Prostate gland (tissue), 2 donors: ENCODE measurements at regions of chr6 and their contacts with region 1.

Region 1: DNA sequence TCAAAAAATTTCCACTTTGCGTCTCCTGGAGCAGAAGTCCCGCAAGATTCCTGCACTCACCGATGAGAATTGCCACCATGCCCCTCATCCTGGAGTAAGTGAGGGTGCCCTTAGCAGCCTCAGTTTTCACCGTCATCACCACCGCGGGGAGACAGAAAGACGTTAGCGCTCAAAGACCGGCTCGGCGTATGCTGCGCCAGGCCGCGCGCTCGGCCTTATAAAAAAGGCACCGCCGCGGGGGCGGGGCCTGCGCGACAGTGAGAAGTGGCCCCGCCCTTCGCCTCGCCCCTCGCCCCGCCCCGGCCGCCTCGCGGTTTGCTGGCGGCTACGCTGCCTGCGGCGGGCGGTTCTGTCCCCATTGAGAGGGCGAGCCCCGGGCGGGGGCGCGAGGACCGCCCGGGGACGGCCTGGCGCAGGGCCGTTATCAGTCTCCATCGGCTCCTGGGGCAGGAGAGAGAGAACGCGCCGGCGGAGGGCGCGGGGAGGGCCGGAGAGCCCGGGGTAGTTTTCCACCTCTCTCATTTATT is 122.3 kb upstream of the SLC2A12 start:
- DNase-seq: peak; percentile 93
- H3K4me3 ChIP-seq: peak overlapping the region; percentile 64 to 73
- H3K27ac ChIP-seq: peak overlapping the region; percentile 90 to 94
- H3K4me1 ChIP-seq: no peaks in the 10 kb centered on the region
- H3K27me3 ChIP-seq: no peaks in the 10 kb centered on the region
- CTCF ChIP-seq: peak in 3 of 4 experiments; percentile 10 to 40 (median 25)
- POLR2A ChIP-seq: peak; percentile 97

Region 2: GRCh38 chr6:134199848-134200606 is 25.3 kb after region 1 on chr6:
- intact Hi-C with region 1: no loop called
- DNase-seq: no peak
- H3K4me3 ChIP-seq: no peak overlapping the region
- H3K27ac ChIP-seq: no peak overlapping the region
- H3K4me1 ChIP-seq: no peaks in the 10 kb centered on the region
- H3K27me3 ChIP-seq: no peaks in the 10 kb centered on the region
- CTCF ChIP-seq: no peak
- POLR2A ChIP-seq: no peak

Region 3: GRCh38 chr6:134640975-134641429 is 466.3 kb after region 1 on chr6:
- intact Hi-C with region 1: loop called (anchors 1 kb)
- DNase-seq: peak; percentile 65
- H3K4me3 ChIP-seq: no peak overlapping the region
- H3K27ac ChIP-seq: no peak overlapping the region
- H3K4me1 ChIP-seq: no peaks in the 10 kb centered on the region
- H3K27me3 ChIP-seq: no peaks in the 10 kb centered on the region
- CTCF ChIP-seq: peak; percentile 72 to 93 (median 92)
- POLR2A ChIP-seq: no peak

Region 4: GRCh38 chr6:134822920-134823709 is 648.4 kb after region 1 on chr6:
- intact Hi-C with region 1: loop called (anchors 5 kb)
- DNase-seq: peak; percentile 63
- H3K4me3 ChIP-seq: no peak overlapping the region
- H3K27ac ChIP-seq: no peak overlapping the region
- H3K4me1 ChIP-seq: no peaks in the 10 kb centered on the region
- H3K27me3 ChIP-seq: no peaks in the 10 kb centered on the region
- CTCF ChIP-seq: peak; percentile 72 to 94 (median 88)
- POLR2A ChIP-seq: no peak

Region 5: GRCh38 chr6:134882426-134883038 is 707.8 kb after region 1 on chr6:
- intact Hi-C with region 1: loop called (anchors 2 kb)
- DNase-seq: peak; percentile 40
- H3K4me3 ChIP-seq: no peak overlapping the region
- H3K27ac ChIP-seq: no peak overlapping the region
- H3K4me1 ChIP-seq: no peaks in the 10 kb centered on the region
- H3K27me3 ChIP-seq: no peaks in the 10 kb centered on the region
- CTCF ChIP-seq: peak; percentile 81 to 93 (median 91)
- POLR2A ChIP-seq: no peak

Region 6: GRCh38 chr6:134943522-134944111 is 768.9 kb after region 1 on chr6:
- intact Hi-C with region 1: loop called (anchors 5 kb)
- DNase-seq: no peak
- H3K4me3 ChIP-seq: no peak overlapping the region
- H3K27ac ChIP-seq: no peak overlapping the region
- H3K4me1 ChIP-seq: no peaks in the 10 kb centered on the region
- H3K27me3 ChIP-seq: no peaks in the 10 kb centered on the region
- CTCF ChIP-seq: no peak
- POLR2A ChIP-seq: no peak